A549 (cell line): ENCODE measurements at regions of chr15 and their contacts with region 1.

Region 1: DNA sequence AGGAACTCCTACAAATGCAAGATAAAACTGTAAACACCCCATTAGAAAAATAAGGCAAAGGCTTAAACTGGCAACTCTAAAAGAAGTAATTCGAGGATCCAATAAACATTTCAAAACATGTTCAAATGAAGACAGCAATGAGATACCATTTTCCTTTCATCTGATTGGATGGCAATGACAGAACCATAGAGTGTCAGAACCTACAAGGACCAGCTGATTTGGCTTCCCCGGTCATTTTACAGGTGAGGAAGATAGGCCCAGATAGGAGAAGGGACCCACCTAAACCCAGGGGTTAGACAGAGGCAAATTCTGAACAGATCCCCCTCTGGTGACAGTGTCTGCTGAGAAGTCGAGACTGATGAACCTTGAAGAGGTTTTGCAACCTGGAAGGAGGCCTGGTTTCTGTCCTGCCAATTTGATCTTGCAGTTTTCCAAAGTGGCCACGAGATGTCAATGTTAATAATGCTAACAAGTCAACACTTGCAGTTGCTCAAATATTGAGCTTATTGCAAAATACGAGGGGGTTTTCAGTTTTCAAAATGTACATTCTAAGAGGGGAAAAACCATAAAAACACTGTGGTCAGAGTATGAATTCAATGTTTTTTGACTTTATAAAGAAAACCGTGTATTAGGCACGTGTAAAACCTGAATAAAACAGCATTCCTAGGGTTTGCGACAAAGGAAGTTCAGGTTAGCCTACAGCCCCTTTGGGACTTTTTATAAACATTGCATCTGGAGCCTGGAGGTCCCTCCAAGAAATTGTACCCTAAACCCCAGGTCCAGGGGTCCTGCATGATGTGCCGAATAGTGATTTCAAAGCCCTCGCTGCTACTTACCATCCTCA is 21.5 kb downstream of the CFAP161 start:
- DNase-seq: peak; percentile 21 to 69
- ATAC-seq: peak; percentile 65 to 80; a peak in 4 of 6 replicates
- H3K4me3 ChIP-seq: no peak overlapping the region
- H3K27ac ChIP-seq: no peak overlapping the region
- H3K4me1 ChIP-seq: no peaks in the 10 kb centered on the region
- CTCF ChIP-seq: peak; percentile 62
- EP300 ChIP-seq: no peak
- POLR2A ChIP-seq: no peak
- RAD21 ChIP-seq: peak; percentile 50 to 59

Region 2: DNA sequence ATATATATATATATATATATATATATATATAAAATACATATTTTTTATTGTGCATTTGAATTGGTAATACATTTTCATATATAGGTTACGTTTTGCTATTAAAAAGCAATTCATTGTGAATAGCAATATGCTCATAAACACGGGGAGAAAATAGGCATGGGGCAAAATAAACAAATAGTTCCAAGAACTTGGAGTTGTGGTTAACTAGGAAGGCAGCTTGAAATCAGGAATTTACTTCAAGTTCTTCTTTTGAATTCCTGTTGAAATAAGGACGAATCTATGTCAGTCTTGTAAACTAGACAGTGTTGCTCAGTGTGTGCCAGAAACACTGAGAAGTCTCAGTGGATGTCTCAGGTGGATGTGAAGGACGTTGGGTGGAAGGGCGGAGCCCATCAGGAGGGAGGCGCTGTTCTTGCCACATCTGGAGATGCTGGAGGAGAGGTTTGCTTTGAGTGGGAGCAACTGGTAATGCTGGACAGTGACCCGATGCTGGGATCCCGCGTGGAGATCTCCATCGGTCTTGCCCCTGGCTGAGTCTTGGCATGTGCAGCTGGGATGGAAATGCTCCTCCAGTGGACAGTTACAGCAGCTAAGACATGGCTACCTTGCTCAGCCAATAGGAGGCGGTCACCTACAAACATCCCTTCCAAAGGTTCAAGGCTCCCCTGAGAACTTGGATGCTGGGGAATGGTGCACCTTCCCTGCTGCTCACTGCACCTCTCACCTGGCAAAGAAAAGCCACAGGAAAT is 43.6 kb after region 1 on chr15:
- CTCF ChIA-PET with region 1: no interaction called
- POLR2A ChIA-PET with region 1: no interaction called
- DNase-seq: no peak
- ATAC-seq: peak in 1 of 2 experiments; percentile 30; a peak in 1 of 6 replicates
- H3K4me3 ChIP-seq: no peak overlapping the region
- H3K27ac ChIP-seq: no peak overlapping the region
- H3K4me1 ChIP-seq: no peaks in the 10 kb centered on the region
- CTCF ChIP-seq: no peak
- EP300 ChIP-seq: no peak
- POLR2A ChIP-seq: no peak
- RAD21 ChIP-seq: no peak

Region 3: DNA sequence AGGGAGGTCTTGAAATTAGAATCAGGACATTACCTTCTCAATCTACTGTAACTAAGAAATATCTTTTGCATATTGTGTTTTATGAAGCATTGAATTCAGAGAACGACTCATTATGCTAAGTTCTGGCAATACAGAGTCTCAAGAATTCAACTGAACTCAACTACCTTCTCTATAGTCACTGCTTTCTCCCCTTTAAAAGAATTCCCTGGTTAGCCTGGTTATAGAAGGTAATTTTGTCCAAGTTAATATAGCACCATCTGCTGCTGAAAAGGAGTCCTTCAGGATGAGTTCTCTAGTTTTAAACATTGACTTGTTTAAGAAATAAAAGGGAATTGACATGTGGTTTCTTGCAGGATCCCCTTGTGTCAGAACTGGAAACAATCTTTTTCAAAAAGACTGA is 101.3 kb after region 1 on chr15:
- CTCF ChIA-PET with region 1: interaction called, 11 read pairs
- POLR2A ChIA-PET with region 1: no interaction called
- DNase-seq: peak in 1 of 2 experiments; percentile 31
- ATAC-seq: peak; percentile 46; a peak in 2 of 6 replicates
- H3K4me3 ChIP-seq: no peak overlapping the region
- H3K27ac ChIP-seq: no peak overlapping the region
- H3K4me1 ChIP-seq: no peaks in the 10 kb centered on the region
- CTCF ChIP-seq: peak; percentile 30; the same call in 2 of the 3 replicates
- EP300 ChIP-seq: no peak
- POLR2A ChIP-seq: no peak
- RAD21 ChIP-seq: peak in 1 of 2 experiments; percentile 14; a peak in 1 of 5 replicates